Psoas muscle (tissue), 8 donors: ENCODE measurements at regions of chr5 and their contacts with region 1.

Region 1: GRCh38 chr5:54590824-54591223 is 73.3 kb downstream of the SNX18 start:
- DNase-seq: no peak
- ATAC-seq: no peak
- H3K4me3 ChIP-seq: no peak overlapping the region
- H3K27ac ChIP-seq: no peak overlapping the region
- H3K4me1 ChIP-seq: no peaks in the 10 kb centered on the region
- H3K27me3 ChIP-seq: no peaks in the 10 kb centered on the region
- CTCF ChIP-seq: no peak

Region 2: DNA sequence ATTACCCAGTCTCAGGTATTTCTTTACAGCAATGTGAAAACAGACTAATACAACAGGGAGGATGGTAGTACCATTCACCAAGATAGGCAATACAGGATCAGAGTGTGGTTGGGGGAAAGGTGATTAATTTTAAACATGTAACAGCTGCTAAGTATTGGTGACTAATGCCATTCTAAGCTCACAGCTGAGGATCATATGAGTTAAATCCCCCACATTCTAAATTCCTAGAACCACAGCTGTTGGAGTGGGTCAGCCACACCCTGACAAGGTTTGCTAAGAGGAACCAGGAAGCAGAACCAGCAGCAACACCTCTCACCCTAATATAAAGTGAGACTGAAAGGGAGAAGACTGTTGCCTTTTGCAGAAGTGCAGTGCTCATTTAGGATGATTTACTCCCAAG is 110.5 kb before region 1 on chr5:
- intact Hi-C with region 1: no loop called
- DNase-seq: no peak
- ATAC-seq: peak in 1 of 4 donors; percentile 30
- H3K4me3 ChIP-seq: no peak overlapping the region
- H3K27ac ChIP-seq: no peak overlapping the region
- H3K4me1 ChIP-seq: peaks cover 16% of the 10 kb centered on the region
- H3K27me3 ChIP-seq: no peaks in the 10 kb centered on the region
- CTCF ChIP-seq: no peak

Region 3: GRCh38 chr5:54615381-54615780 is 24.6 kb after region 1 on chr5:
- intact Hi-C with region 1: loop called in 1 of 2 experiments (anchors 1 kb)
- DNase-seq: no peak
- ATAC-seq: no peak
- H3K4me3 ChIP-seq: no peak overlapping the region
- H3K27ac ChIP-seq: no peak overlapping the region
- H3K4me1 ChIP-seq: no peaks in the 10 kb centered on the region
- H3K27me3 ChIP-seq: no peaks in the 10 kb centered on the region
- CTCF ChIP-seq: no peak